Motor neuron (in vitro differentiated cells): ENCODE measurements at regions of chr5 and their contacts with region 1.

Region 1: GRCh38 chr5:76082772-76083554 is at the start of gene SV2C:
- ATAC-seq: peak; percentile 50 to 75 (median 72)
- H3K4me3 ChIP-seq: peak within 1 kb of the TSS; percentile 43 to 73 (median 50)
- H3K27ac ChIP-seq: peak within 1 kb of the TSS; percentile 71 to 91
- H3K4me1 ChIP-seq: peaks cover 13 to 17% of the 10 kb centered on the region in 2 donors
- total RNA-seq, gene SV2C: 0.20 to 21.8 (median 11.5) TPM

Region 2: GRCh38 chr5:76256116-76256889 is 173.3 kb after region 1 on chr5:
- in situ Hi-C with region 1: loop called in 1 of 9 experiments (anchors 25 kb)
- ATAC-seq: peak; percentile 97 to 98 (median 98)
- H3K4me3 ChIP-seq: no peak overlapping the region
- H3K27ac ChIP-seq: no peak overlapping the region
- H3K4me1 ChIP-seq: peaks cover 4 to 22% of the 10 kb centered on the region in 2 donors

Region 3: DNA sequence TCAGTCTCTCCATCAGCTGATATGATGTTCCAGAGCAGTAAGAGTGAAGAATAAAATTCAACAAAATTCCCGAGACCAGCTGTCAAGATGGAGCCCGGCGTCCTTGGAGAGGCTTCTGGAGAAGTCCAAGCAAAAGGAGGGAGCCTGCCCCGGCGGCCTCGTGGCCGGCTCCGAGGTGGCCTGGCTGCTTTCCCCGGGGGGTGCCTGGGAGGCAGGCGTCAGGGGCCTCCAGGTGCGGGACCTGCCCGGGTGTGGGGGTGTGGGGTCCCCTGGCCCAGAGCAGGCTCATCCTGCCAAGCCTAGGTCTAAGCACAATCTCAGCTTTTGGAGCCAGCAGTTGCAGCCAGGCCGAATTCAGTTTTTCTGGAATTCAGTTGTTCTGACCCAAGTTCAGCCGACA is 197.5 kb after region 1 on chr5:
- in situ Hi-C with region 1: no loop called
- ATAC-seq: no peak
- H3K4me3 ChIP-seq: no peak overlapping the region
- H3K27ac ChIP-seq: no peak overlapping the region
- H3K4me1 ChIP-seq: no peaks in the 10 kb centered on the region

Region 4: GRCh38 chr5:76556511-76557221 is 473.7 kb after region 1 on chr5:
- in situ Hi-C with region 1: loop called in 1 of 9 experiments (anchors 25 kb)
- ATAC-seq: no peak
- H3K4me3 ChIP-seq: no peak overlapping the region
- H3K27ac ChIP-seq: no peak overlapping the region
- H3K4me1 ChIP-seq: no peaks in the 10 kb centered on the region